Activated T-helper 1 cell treated with anti-CD3 and anti-CD28 coated beads, Interleukin-12 subunit alpha, Interleukin-12 subunit beta, Interleukin-2, Interleukin-4 antibody, amounts not matched to agents 30 ng/mL and 10 ng/mL and 1 ng/mL, durations not matched to agents 14 hours and 24 hours and 36 hours (primary cell): ENCODE measurements at regions of chr14 and their contacts with region 1.

Region 1: GRCh38 chr14:58637391-58638230 is at the start of gene DACT1:
- DNase-seq: peak; percentile 49
- H3K4me3 Mint-ChIP-seq: peak within 1 kb of the TSS; percentile 86
- H3K27ac Mint-ChIP-seq: peak within 1 kb of the TSS; percentile 75
- H3K4me1 Mint-ChIP-seq: peaks cover 35% of the 10 kb centered on the region
- H3K27me3 Mint-ChIP-seq: peaks cover 37% of the 10 kb centered on the region
- total RNA-seq, gene DACT1: 1.6 and 2.3 TPM in 2 replicates

Region 2: DNA sequence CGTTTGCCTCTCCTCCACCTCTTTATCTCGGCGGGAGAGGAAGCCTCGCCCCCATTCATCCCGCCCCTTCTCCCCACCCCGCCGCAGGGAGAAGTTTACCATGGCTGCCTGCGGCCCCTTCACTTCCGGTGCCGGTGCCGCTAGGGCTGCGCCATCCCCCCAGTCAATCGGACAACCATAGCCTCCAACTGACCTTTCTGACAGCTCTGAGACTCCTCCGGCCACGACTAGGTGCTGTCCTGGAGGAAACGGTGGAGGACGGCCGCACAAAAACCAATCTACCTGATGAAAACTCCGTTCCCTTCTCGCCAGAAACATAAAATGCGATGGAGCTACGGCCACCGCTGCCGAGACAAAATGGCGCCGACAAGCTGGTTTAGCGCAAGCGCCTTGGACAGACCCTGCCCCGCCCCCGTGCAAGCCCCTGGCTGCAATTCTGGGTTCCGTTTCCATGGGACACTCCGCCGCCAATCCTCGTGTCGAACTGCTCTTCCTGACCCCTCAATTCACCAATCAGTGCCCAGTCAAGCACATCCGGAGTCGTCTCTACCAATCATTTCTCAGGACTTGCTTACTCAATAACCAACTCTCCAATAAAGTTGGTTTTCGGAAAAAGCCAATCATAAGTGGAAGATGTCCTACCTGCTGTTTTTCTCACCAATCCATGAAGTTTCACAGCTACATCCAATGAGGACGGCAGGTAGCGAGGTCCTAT is 339.7 kb before region 1 on chr14:
- intact Hi-C with region 1: loop called (anchors 5 kb)
- DNase-seq: peak; percentile 97
- H3K4me3 Mint-ChIP-seq: no peak overlapping the region
- H3K27ac Mint-ChIP-seq: no peak overlapping the region
- H3K4me1 Mint-ChIP-seq: peaks cover 53% of the 10 kb centered on the region
- H3K27me3 Mint-ChIP-seq: no peaks in the 10 kb centered on the region

Region 3: GRCh38 chr14:58571769-58572472 is 65.7 kb before region 1 on chr14:
- intact Hi-C with region 1: loop called (anchors 1 kb)
- DNase-seq: no peak
- H3K4me3 Mint-ChIP-seq: peak overlapping the region; percentile 67
- H3K27ac Mint-ChIP-seq: peak overlapping the region; percentile 88
- H3K4me1 Mint-ChIP-seq: peaks cover 21% of the 10 kb centered on the region
- H3K27me3 Mint-ChIP-seq: peaks cover 2% of the 10 kb centered on the region

Region 4: DNA sequence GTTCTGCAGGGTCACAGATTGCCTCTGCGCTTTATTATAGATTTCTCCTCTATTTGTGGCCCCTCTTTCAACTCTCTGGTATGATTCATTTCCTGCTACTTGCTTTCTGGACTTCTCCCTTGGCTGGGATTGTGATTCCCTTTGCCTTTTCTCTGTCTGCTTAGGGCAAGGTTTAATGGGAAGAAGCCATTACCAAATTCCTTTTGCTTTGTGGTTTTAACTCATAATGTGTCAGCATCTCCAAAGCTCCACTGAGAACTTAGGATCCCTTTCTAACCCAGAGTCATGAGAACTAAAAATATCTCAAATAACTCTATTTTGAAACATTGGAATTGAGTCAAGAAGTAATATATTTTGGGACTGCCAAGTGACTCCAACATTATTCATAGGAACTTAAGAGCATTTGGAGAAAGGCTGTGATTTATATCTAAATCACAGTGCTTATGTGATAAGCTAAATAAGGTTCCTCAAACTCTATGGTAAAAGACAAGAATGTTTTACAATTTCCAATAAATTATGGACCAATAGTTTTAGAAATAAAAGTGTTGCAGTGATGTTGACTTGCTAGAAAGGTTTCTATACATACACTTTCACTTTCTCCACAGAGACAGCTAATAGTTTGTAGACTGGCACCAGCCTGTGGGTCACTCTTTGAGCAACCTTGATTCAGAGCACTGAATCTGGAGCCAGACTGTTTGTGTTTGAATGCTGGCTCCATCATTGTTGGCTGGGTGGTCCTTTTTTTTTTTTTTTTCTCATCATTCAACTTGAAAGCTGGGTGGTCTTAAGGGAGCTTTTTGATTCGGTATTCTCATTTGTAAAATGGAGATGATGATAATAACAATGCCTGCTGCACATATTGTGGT is 94.1 kb after region 1 on chr14:
- intact Hi-C with region 1: loop called (anchors 5 kb)
- DNase-seq: no peak
- H3K4me3 Mint-ChIP-seq: no peak overlapping the region
- H3K27ac Mint-ChIP-seq: no peak overlapping the region
- H3K4me1 Mint-ChIP-seq: peaks cover 9% of the 10 kb centered on the region
- H3K27me3 Mint-ChIP-seq: no peaks in the 10 kb centered on the region

Region 5: GRCh38 chr14:59020382-59020781 is 382.8 kb after region 1 on chr14:
- intact Hi-C with region 1: loop called (anchors 2 kb)
- DNase-seq: no peak
- H3K4me3 Mint-ChIP-seq: no peak overlapping the region
- H3K27ac Mint-ChIP-seq: no peak overlapping the region
- H3K4me1 Mint-ChIP-seq: no peaks in the 10 kb centered on the region
- H3K27me3 Mint-ChIP-seq: peaks cover 3% of the 10 kb centered on the region

Region 6: GRCh38 chr14:59189786-59190771 is 552.5 kb after region 1 on chr14:
- intact Hi-C with region 1: loop called (anchors 1 kb)
- DNase-seq: peak; percentile 73
- H3K4me3 Mint-ChIP-seq: peak overlapping the region; percentile 96
- H3K27ac Mint-ChIP-seq: peak overlapping the region; percentile 87
- H3K4me1 Mint-ChIP-seq: peaks cover 11% of the 10 kb centered on the region
- H3K27me3 Mint-ChIP-seq: peaks cover 17% of the 10 kb centered on the region

Region 7: GRCh38 chr14:59406454-59407245 is 769.0 kb after region 1 on chr14:
- intact Hi-C with region 1: no loop called
- DNase-seq: no peak
- H3K4me3 Mint-ChIP-seq: no peak overlapping the region
- H3K27ac Mint-ChIP-seq: no peak overlapping the region
- H3K4me1 Mint-ChIP-seq: no peaks in the 10 kb centered on the region
- H3K27me3 Mint-ChIP-seq: peaks cover 2% of the 10 kb centered on the region